ENCODE measurements at regions of chr17 and their contacts with region 1.

Region 1: GRCh38 chr17:73359987-73360410 is 48.2 kb upstream of the CDC42EP4 start:
- DNase-seq: peak; percentile 65
- H3K4me3 ChIP-seq: no peak overlapping the region
- H3K27ac ChIP-seq: no peak overlapping the region
- H3K4me1 ChIP-seq: peaks cover 10% of the 10 kb centered on the region
- H3K27me3 ChIP-seq: no peaks in the 10 kb centered on the region
- CTCF ChIP-seq: peak; percentile 14 to 51

Region 2: GRCh38 chr17:73237714-73238113 is 122.3 kb before region 1 on chr17:
- CTCF ChIA-PET with region 1: no interaction called
- dilution Hi-C with region 1: loop called (anchors 5 kb)
- in situ Hi-C with region 1: no loop called
- intact Hi-C with region 1: no loop called
- DNase-seq: no peak
- H3K4me3 ChIP-seq: no peak overlapping the region
- H3K27ac ChIP-seq: no peak overlapping the region
- H3K4me1 ChIP-seq: peaks cover 4% of the 10 kb centered on the region
- H3K27me3 ChIP-seq: no peaks in the 10 kb centered on the region
- CTCF ChIP-seq: no peak

Region 3: DNA sequence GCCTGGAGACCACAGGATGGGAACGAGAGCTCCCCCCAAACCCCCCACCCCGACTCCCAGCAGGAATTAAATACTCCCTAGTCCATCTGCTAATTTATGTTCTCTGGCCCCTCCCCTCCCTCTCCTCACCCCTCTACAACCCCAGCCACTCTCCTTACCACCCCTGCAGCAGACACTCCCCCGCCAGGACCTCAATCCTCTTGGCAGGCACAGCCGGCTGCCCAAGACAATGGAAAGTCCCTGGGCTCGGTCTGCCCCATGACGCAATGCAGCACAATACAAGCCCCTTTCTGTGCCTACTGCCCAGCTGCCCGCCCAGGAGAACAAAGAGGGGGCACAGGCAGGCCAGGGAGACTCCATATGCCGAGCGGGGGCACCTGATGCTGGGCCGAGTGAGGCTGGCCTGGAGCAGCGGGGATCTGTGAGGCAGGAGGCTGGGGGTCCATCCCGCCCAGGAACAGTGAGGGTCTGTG is 17.9 kb before region 1 on chr17:
- CTCF ChIA-PET with region 1: no interaction called
- dilution Hi-C with region 1: no loop called
- in situ Hi-C with region 1: no loop called
- intact Hi-C with region 1: no loop called
- DNase-seq: peak; percentile 96
- H3K4me3 ChIP-seq: no peak overlapping the region
- H3K27ac ChIP-seq: peak overlapping the region; percentile 96
- H3K4me1 ChIP-seq: peaks cover 33% of the 10 kb centered on the region
- H3K27me3 ChIP-seq: no peaks in the 10 kb centered on the region
- CTCF ChIP-seq: no peak

Region 4: DNA sequence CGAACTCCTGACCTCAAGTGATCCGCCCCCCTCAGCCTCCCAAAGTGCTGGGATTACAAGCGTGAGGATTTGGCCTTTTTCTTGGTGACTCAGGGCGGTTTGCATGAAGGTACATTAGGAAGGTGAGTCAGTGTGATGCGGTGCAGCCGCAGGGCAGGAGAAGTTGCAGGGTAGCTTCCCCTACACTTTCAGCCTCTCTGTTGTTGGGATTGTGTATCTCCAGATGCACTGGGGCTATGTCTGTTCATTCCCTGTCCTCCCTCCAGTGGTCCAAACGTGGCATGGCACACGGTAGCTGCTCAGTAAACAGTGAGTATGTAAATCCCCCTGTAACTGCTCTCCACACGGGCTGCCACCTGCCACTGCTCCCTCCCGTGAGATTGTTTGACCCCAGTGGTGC is 60.9 kb after region 1 on chr17:
- CTCF ChIA-PET with region 1: no interaction called
- dilution Hi-C with region 1: loop called (anchors 5 kb)
- in situ Hi-C with region 1: no loop called
- intact Hi-C with region 1: no loop called
- DNase-seq: peak; percentile 83
- H3K4me3 ChIP-seq: no peak overlapping the region
- H3K27ac ChIP-seq: no peak overlapping the region
- H3K4me1 ChIP-seq: peaks cover 4% of the 10 kb centered on the region
- H3K27me3 ChIP-seq: no peaks in the 10 kb centered on the region
- CTCF ChIP-seq: peak; percentile 30 to 33

Measured in mammary epithelial cell (primary cell).